ENCODE measurements at regions of chr3 and their contacts with region 1.

Region 1: DNA sequence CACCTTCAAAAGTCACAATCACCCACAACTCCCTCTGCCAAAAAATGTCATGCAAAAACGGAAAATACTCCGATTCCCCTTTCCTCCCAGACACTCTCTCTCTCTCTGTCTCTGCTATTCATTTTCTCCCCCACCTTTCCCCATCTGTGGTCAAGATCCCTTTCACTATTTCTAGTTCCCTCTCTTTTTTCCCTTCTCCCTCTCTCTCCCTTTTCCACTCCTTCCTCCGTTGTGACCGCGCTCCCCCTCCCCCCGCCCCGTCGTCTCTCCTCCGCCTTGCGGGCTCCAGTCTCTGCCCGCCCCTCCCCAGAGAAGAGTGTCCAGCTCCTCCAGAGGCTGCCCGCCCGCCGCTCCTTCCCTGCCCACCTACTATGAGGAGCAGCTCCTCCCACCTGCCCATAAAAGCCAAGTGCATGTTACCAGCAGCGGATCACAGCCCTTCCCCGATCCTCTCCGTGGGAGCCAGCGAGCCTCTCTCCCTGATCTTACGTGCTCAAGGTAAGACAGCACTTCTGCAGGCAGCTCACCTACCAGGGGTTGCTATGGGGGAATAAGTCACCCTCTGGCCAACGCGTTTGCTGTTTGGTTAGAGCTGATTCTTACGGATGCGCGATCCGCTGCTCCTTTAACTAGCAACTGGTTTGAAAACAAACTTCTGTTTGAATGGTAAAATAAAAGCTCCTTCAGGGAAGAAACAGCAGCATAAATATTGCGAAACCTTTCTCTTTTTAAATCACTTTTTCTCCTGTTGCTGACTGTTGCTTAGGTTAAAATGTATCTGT is at the start of gene COL8A1:
- DNase-seq: peak; percentile 94
- H3K4me3 ChIP-seq: peak within 1 kb of the TSS; percentile 90 to 94 (median 91)
- H3K27ac ChIP-seq: peak within 1 kb of the TSS; percentile 100
- H3K4me1 ChIP-seq: peaks cover 72% of the 10 kb centered on the region
- H3K27me3 ChIP-seq: no peaks in the 10 kb centered on the region
- CTCF ChIP-seq: no peak
- POLR2A ChIP-seq: peak; percentile 94
- total RNA-seq, gene COL8A1: 217 and 358 TPM in 2 replicates

Region 2: GRCh38 chr3:98199020-98199419 is 1439.3 kb before region 1 on chr3:
- CTCF ChIA-PET with region 1: no interaction called
- POLR2A ChIA-PET with region 1: no interaction called
- dilution Hi-C with region 1: no loop called
- intact Hi-C with region 1: no loop called
- DNase-seq: no peak
- H3K4me3 ChIP-seq: no peak overlapping the region
- H3K27ac ChIP-seq: no peak overlapping the region
- H3K4me1 ChIP-seq: no peaks in the 10 kb centered on the region
- H3K27me3 ChIP-seq: no peaks in the 10 kb centered on the region
- CTCF ChIP-seq: no peak
- POLR2A ChIP-seq: no peak

Region 3: GRCh38 chr3:99128725-99129505 is 509.4 kb before region 1 on chr3:
- CTCF ChIA-PET with region 1: interaction called, 3 read pairs
- POLR2A ChIA-PET with region 1: interaction called, 3 read pairs
- dilution Hi-C with region 1: no loop called
- intact Hi-C with region 1: loop called (anchors 5 kb)
- DNase-seq: peak; percentile 91
- H3K4me3 ChIP-seq: no peak overlapping the region
- H3K27ac ChIP-seq: peak overlapping the region; percentile 76
- H3K4me1 ChIP-seq: peaks cover 23% of the 10 kb centered on the region
- H3K27me3 ChIP-seq: no peaks in the 10 kb centered on the region
- CTCF ChIP-seq: no peak
- POLR2A ChIP-seq: no peak

Region 4: DNA sequence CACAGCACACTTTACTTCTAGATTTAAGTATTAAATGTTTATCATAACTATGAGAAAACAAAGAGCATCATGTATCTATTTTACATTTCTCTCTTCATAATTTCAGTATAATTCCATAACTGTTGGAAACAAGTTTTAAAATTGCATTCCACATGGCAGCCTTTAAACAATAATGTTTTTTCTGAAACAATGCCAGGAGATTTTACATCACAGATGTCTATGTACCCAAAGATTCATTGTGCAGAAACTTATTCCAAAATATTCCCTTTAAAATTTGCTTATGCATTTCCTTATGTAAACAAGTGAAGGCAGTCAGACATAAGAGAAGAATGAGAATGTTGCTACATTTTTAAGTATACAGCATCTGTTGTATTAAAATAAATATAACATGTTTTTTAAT is 324.9 kb before region 1 on chr3:
- CTCF ChIA-PET with region 1: interaction called, 4 read pairs
- POLR2A ChIA-PET with region 1: no interaction called
- dilution Hi-C with region 1: no loop called
- intact Hi-C with region 1: loop called (anchors 2 kb)
- DNase-seq: peak; percentile 89
- H3K4me3 ChIP-seq: no peak overlapping the region
- H3K27ac ChIP-seq: peak overlapping the region; percentile 75
- H3K4me1 ChIP-seq: peaks cover 29% of the 10 kb centered on the region
- H3K27me3 ChIP-seq: no peaks in the 10 kb centered on the region
- CTCF ChIP-seq: no peak
- POLR2A ChIP-seq: no peak

Region 5: DNA sequence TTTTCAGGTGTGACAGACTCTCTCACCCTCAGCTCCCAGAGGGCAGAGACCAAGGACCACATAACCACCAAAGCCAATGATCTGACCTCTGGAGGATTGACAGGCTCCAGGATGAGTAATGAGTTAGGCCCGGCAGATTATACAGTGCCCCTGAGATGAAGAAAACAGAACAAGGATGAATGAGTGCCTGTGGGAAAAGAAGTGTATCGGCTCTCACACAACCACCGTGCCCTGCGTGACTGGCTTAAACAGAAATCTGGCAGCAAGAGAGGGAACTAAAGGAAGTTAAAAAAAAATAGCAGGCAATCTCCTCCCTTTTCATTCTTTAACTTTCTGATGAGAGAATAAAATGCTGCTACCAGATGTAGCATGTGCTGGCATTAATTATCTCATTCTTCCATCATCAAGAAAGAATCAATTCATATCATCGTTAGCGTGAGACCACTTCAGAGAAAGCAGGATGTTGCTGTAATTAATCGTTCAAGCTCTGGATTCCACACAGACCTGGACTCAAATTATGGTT is 227.5 kb before region 1 on chr3:
- CTCF ChIA-PET with region 1: no interaction called
- POLR2A ChIA-PET with region 1: no interaction called
- dilution Hi-C with region 1: no loop called
- intact Hi-C with region 1: no loop called
- DNase-seq: peak; percentile 93
- H3K4me3 ChIP-seq: no peak overlapping the region
- H3K27ac ChIP-seq: peak overlapping the region; percentile 17
- H3K4me1 ChIP-seq: peaks cover 32% of the 10 kb centered on the region
- H3K27me3 ChIP-seq: no peaks in the 10 kb centered on the region
- CTCF ChIP-seq: no peak
- POLR2A ChIP-seq: no peak

Region 6: GRCh38 chr3:99551520-99551919 is 86.8 kb before region 1 on chr3:
- CTCF ChIA-PET with region 1: interaction called, 24 read pairs
- POLR2A ChIA-PET with region 1: interaction called, 17 read pairs
- dilution Hi-C with region 1: no loop called
- intact Hi-C with region 1: no loop called
- DNase-seq: no peak
- H3K4me3 ChIP-seq: no peak overlapping the region
- H3K27ac ChIP-seq: no peak overlapping the region
- H3K4me1 ChIP-seq: peaks cover 39% of the 10 kb centered on the region
- H3K27me3 ChIP-seq: no peaks in the 10 kb centered on the region
- CTCF ChIP-seq: peak in 1 of 2 donors; percentile 4
- POLR2A ChIP-seq: no peak

Region 7: GRCh38 chr3:99686955-99687612 is 48.7 kb after region 1 on chr3:
- CTCF ChIA-PET with region 1: interaction called, 11 read pairs
- POLR2A ChIA-PET with region 1: no interaction called
- dilution Hi-C with region 1: no loop called
- intact Hi-C with region 1: loop called (anchors 2 kb)
- DNase-seq: peak; percentile 71
- H3K4me3 ChIP-seq: no peak overlapping the region
- H3K27ac ChIP-seq: no peak overlapping the region
- H3K4me1 ChIP-seq: peaks cover 11% of the 10 kb centered on the region
- H3K27me3 ChIP-seq: no peaks in the 10 kb centered on the region
- CTCF ChIP-seq: peak; percentile 54 to 55
- POLR2A ChIP-seq: peak; percentile 4

Region 8: DNA sequence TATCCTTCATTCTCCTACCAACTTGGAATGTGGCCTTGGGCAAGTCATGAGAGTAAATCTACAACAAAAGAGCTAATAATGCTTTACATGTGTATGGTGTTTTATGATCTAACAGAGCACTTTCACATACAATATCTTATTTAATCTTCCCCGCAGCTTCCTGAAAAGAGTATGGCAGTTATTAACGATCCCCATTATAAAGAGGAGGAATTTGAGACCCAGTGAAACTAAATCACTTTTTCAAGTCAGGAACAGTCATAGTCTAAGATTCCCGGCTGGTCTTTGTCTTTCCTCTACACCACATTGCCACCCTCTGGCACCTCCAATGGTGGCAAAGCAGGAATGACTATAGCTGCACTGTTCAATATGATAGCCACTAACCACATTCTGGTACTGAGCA is 109.6 kb after region 1 on chr3:
- CTCF ChIA-PET with region 1: interaction called, 13 read pairs
- POLR2A ChIA-PET with region 1: interaction called, 5 read pairs
- dilution Hi-C with region 1: no loop called
- intact Hi-C with region 1: no loop called
- DNase-seq: peak; percentile 62
- H3K4me3 ChIP-seq: no peak overlapping the region
- H3K27ac ChIP-seq: peak overlapping the region; percentile 12
- H3K4me1 ChIP-seq: peaks cover 24% of the 10 kb centered on the region
- H3K27me3 ChIP-seq: no peaks in the 10 kb centered on the region
- CTCF ChIP-seq: peak; percentile 23 to 27
- POLR2A ChIP-seq: no peak

Region 9: GRCh38 chr3:99753268-99753975 is 115.1 kb after region 1 on chr3:
- CTCF ChIA-PET with region 1: interaction called, 13 read pairs
- POLR2A ChIA-PET with region 1: interaction called, 5 read pairs
- dilution Hi-C with region 1: no loop called
- intact Hi-C with region 1: no loop called
- DNase-seq: peak; percentile 77
- H3K4me3 ChIP-seq: no peak overlapping the region
- H3K27ac ChIP-seq: peak overlapping the region; percentile 21
- H3K4me1 ChIP-seq: peaks cover 28% of the 10 kb centered on the region
- H3K27me3 ChIP-seq: no peaks in the 10 kb centered on the region
- CTCF ChIP-seq: peak; percentile 56 to 58
- POLR2A ChIP-seq: no peak

Region 10: DNA sequence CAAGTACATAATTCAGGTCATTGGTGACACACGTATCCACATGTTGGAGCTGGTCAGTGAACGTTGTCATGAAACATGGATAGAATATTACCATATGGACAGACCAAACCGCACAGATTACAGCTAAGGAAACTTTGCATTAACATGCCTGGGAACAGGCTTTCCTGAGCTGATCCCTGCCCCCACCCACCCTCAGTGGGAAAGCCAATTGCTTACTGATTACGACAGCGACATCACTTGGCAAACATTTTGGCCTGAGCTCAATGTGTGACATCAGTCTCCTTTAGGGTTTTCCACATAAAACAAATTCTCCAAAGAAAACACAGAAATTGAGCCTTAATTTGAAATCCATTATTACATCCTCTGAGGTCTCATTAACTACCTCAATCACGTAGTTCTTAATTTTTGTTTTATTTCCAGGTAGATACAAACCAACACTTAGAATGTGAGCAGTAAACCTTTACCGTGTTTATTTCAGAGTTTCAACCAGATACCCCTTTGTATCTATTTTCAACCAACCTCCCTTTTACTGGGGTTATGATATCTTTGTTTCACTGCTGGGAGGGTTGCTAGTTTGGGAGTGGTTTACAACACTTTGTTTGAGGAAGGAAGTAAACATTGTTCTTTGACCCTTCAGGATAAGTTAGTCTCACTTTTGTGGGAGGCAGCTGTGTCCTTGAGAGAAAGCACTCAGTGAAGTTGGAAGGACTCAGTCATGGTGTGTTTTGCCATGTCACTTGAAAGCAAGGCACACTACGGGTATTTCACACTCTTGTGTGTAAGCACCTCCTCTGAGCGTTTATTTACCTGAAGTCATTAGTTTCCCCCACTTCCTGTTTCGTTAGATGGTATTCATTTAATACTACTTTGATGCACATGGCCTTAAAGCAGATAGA is 282.4 kb after region 1 on chr3:
- CTCF ChIA-PET with region 1: no interaction called
- POLR2A ChIA-PET with region 1: no interaction called
- dilution Hi-C with region 1: no loop called
- intact Hi-C with region 1: no loop called
- DNase-seq: peak; percentile 66
- H3K4me3 ChIP-seq: no peak overlapping the region
- H3K27ac ChIP-seq: peak overlapping the region; percentile 65
- H3K4me1 ChIP-seq: peaks cover 41% of the 10 kb centered on the region
- H3K27me3 ChIP-seq: no peaks in the 10 kb centered on the region
- CTCF ChIP-seq: no peak
- POLR2A ChIP-seq: no peak